ENCODE measurements at regions of chr1 and their contacts with region 1.

Region 1: DNA sequence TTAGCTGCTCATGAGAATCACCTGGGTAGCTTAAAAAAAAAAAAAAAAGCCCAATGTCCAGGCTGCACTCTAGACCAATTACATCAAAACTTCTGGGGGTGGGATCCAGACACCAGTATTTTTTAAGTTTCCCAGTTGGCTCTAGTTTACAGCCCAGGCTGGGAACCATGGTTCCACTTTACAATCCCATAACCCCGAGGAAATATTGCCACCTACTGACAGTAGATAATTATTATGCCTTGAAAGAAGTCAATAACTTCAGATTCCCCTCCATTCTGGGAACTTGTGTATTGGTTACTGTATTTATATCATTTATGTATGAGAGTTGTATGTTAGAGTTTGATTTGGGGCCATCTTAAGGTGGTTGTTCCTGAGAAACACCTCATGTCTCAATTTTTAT is 100.2 kb downstream of the SPATA46 start:
- DNase-seq: peak; percentile 25
- ATAC-seq: peak; percentile 82
- H3K4me3 ChIP-seq: no peak overlapping the region
- H3K27ac ChIP-seq: no peak overlapping the region
- H3K4me1 ChIP-seq: no peaks in the 10 kb centered on the region
- H3K27me3 ChIP-seq: peaks cover 10% of the 10 kb centered on the region
- CTCF ChIP-seq: peak; percentile 55
- POLR2A ChIP-seq: no peak
- RAD21 ChIP-seq: peak; percentile 56

Region 2: DNA sequence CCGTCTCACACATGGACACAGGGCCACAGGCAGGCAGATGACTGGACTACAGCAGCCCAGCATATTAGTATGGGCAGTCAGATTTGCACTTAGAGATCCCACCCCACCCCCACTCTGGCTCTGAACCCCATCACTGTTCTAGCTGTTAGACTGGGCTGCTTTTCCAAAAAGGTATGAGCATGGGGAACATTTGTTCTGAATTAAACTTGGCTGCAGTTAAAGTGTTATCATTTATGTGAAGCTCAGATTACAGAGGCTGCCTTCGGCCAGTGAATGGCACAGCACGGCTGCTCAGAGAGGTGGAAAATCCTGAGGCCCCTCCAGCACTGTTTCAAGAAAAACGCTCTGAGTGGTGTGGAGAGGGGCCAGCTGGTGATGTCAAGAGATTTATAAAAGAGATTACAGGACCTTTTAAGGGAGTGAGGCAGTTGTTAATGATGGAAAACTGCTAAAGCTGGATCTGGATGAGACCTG is 213.9 kb before region 1 on chr1:
- CTCF ChIA-PET with region 1: no interaction called
- POLR2A ChIA-PET with region 1: no interaction called
- dilution Hi-C with region 1: no loop called
- in situ Hi-C with region 1: loop called (anchors 5 kb)
- intact Hi-C with region 1: loop called (anchors 1 kb)
- DNase-seq: peak; percentile 41
- ATAC-seq: peak; percentile 77
- H3K4me3 ChIP-seq: no peak overlapping the region
- H3K27ac ChIP-seq: no peak overlapping the region
- H3K4me1 ChIP-seq: no peaks in the 10 kb centered on the region
- H3K27me3 ChIP-seq: peaks cover 18% of the 10 kb centered on the region
- CTCF ChIP-seq: no peak
- POLR2A ChIP-seq: no peak
- RAD21 ChIP-seq: no peak

Region 3: GRCh38 chr1:162319493-162320175 is 43.1 kb after region 1 on chr1:
- CTCF ChIA-PET with region 1: no interaction called
- POLR2A ChIA-PET with region 1: no interaction called
- dilution Hi-C with region 1: no loop called
- in situ Hi-C with region 1: no loop called
- intact Hi-C with region 1: no loop called
- DNase-seq: peak; percentile 16
- ATAC-seq: no peak
- H3K4me3 ChIP-seq: no peak overlapping the region
- H3K27ac ChIP-seq: no peak overlapping the region
- H3K4me1 ChIP-seq: no peaks in the 10 kb centered on the region
- H3K27me3 ChIP-seq: peaks cover 3% of the 10 kb centered on the region
- CTCF ChIP-seq: no peak
- POLR2A ChIP-seq: no peak
- RAD21 ChIP-seq: no peak

Region 4: GRCh38 chr1:162391790-162392563 is 115.5 kb after region 1 on chr1:
- CTCF ChIA-PET with region 1: interaction called, 3 read pairs
- POLR2A ChIA-PET with region 1: no interaction called
- dilution Hi-C with region 1: no loop called
- in situ Hi-C with region 1: no loop called
- intact Hi-C with region 1: loop called (anchors 5 kb)
- DNase-seq: peak; percentile 58
- ATAC-seq: peak; percentile 93
- H3K4me3 ChIP-seq: no peak overlapping the region
- H3K27ac ChIP-seq: no peak overlapping the region
- H3K4me1 ChIP-seq: no peaks in the 10 kb centered on the region
- H3K27me3 ChIP-seq: peaks cover 27% of the 10 kb centered on the region
- CTCF ChIP-seq: peak; percentile 77
- POLR2A ChIP-seq: no peak
- RAD21 ChIP-seq: peak; percentile 70

Region 5: DNA sequence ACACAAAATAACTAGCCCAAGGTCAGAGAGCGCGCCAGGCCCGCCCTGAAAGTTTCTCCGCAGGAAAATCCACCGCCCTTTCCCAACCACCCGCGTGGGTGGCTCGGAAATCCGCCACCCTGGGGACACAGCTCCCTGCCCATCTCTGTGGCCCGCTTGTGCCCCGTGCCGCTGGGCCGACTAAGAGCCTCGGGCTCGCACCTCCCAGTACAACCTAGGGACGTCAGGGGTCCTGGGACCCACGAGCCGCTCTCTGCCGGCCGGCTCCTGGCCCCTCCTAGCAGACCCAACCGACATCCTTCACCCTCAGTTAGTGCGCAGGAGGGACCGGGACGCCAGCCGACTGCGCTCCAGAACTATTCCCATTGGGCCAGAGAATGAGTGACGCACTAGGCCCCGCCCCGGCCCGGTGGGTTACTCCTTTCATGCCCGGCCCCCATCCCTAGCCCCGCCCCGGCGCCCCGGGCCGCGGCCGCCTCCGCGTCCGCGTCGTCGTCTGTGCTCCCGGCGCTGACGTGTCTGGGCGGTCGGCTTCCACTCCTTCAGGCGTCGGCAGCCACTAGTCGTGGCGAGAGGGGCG is 284.6 kb after region 1 on chr1:
- CTCF ChIA-PET with region 1: no interaction called
- POLR2A ChIA-PET with region 1: no interaction called
- dilution Hi-C with region 1: no loop called
- in situ Hi-C with region 1: no loop called
- intact Hi-C with region 1: no loop called
- DNase-seq: peak; percentile 96
- ATAC-seq: peak; percentile 97
- H3K4me3 ChIP-seq: peak overlapping the region; percentile 94
- H3K27ac ChIP-seq: peak overlapping the region; percentile 79
- H3K4me1 ChIP-seq: peaks cover 10% of the 10 kb centered on the region
- H3K27me3 ChIP-seq: no peaks in the 10 kb centered on the region
- CTCF ChIP-seq: no peak
- POLR2A ChIP-seq: peak; percentile 90
- RAD21 ChIP-seq: peak; percentile 5; the same call in 1 of the 2 replicates

Measured in IMR-90 (cell line).